ENCODE measurements at regions of chr5 and their contacts with region 1.

Region 1: DNA sequence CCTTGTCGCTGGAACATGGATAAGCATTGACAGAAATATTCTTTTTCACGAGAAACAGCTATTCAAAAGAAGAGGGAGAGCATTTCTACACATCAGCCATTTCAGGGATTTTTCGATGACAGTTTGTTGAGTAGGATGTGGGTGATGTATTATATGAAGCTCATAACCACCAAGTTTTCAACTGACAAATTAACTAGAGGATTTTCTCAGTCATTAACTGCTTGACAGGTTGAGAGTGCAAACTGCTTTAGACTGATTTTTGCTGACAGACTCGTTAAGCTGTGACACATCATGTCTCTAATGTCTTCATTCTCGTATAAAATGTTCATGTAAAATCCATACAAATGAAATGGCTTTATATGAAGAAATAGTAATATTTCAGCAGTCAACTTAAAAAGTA is 354.2 kb upstream of the KCNN2 start:
- DNase-seq: no peak
- H3K4me3 ChIP-seq: no peak overlapping the region
- H3K27ac ChIP-seq: no peak overlapping the region
- H3K4me1 ChIP-seq: no peaks in the 10 kb centered on the region
- H3K27me3 ChIP-seq: no peaks in the 10 kb centered on the region
- CTCF ChIP-seq: no peak
- EP300 ChIP-seq: no peak
- POLR2A ChIP-seq: no peak
- RAD21 ChIP-seq: no peak

Region 2: GRCh38 chr5:113660206-113660605 is 347.5 kb before region 1 on chr5:
- CTCF ChIA-PET with region 1: no interaction called
- POLR2A ChIA-PET with region 1: no interaction called
- DNase-seq: no peak
- H3K4me3 ChIP-seq: no peak overlapping the region
- H3K27ac ChIP-seq: no peak overlapping the region
- H3K4me1 ChIP-seq: no peaks in the 10 kb centered on the region; a peak in 1 of 7 replicates
- H3K27me3 ChIP-seq: no peaks in the 10 kb centered on the region
- CTCF ChIP-seq: no peak
- EP300 ChIP-seq: no peak
- POLR2A ChIP-seq: no peak
- RAD21 ChIP-seq: no peak

Region 3: DNA sequence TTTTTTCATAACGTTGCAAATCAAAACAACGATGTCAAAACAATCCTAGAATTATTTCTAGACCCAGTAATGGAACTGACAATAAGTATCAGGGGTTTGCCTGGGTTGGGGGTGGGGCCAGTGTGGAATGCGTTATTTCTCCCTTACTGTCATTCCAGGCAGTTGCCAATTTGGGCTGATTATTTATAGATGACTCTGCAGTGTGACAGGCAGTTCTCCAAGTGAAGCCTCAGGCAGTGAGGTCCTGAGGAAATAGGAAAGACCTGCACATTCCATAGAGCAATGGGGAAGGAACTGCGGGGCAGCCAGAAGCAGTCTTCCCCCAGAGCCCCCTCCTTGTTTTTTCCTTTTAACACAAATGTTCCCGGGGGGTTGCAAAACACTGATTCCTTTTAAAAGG is 315.2 kb before region 1 on chr5:
- CTCF ChIA-PET with region 1: no interaction called
- POLR2A ChIA-PET with region 1: no interaction called
- DNase-seq: no peak
- H3K4me3 ChIP-seq: peak overlapping the region in 2 of 4 experiments; percentile 30 to 49; a peak in 5 of 8 replicates
- H3K27ac ChIP-seq: no peak overlapping the region
- H3K4me1 ChIP-seq: peaks cover 3 to 13% (median 6%) of the 10 kb centered on the region in 4 experiments; a peak in 6 of 7 replicates
- H3K27me3 ChIP-seq: no peaks in the 10 kb centered on the region
- CTCF ChIP-seq: no peak
- EP300 ChIP-seq: no peak
- POLR2A ChIP-seq: no peak
- RAD21 ChIP-seq: no peak

Region 4: GRCh38 chr5:113937301-113937700 is 70.4 kb before region 1 on chr5:
- CTCF ChIA-PET with region 1: no interaction called
- POLR2A ChIA-PET with region 1: no interaction called
- DNase-seq: no peak
- H3K4me3 ChIP-seq: no peak overlapping the region
- H3K27ac ChIP-seq: no peak overlapping the region
- H3K4me1 ChIP-seq: peaks cover 0 to 9% (median 2%) of the 10 kb centered on the region in 4 experiments; a peak in 4 of 7 replicates
- H3K27me3 ChIP-seq: peaks cover 0 to 1% (median 0%) of the 10 kb centered on the region in 4 experiments; a peak in 1 of 7 replicates
- CTCF ChIP-seq: no peak
- EP300 ChIP-seq: no peak
- POLR2A ChIP-seq: no peak
- RAD21 ChIP-seq: no peak

Region 5: GRCh38 chr5:113990581-113990980 is 17.1 kb before region 1 on chr5:
- CTCF ChIA-PET with region 1: interaction called, 10 read pairs
- POLR2A ChIA-PET with region 1: no interaction called
- DNase-seq: no peak
- H3K4me3 ChIP-seq: no peak overlapping the region
- H3K27ac ChIP-seq: no peak overlapping the region
- H3K4me1 ChIP-seq: no peaks in the 10 kb centered on the region
- H3K27me3 ChIP-seq: no peaks in the 10 kb centered on the region
- CTCF ChIP-seq: peak in 1 of 3 experiments; percentile 11; a peak in 1 of 4 replicates
- EP300 ChIP-seq: no peak
- POLR2A ChIP-seq: no peak
- RAD21 ChIP-seq: no peak

Region 6: DNA sequence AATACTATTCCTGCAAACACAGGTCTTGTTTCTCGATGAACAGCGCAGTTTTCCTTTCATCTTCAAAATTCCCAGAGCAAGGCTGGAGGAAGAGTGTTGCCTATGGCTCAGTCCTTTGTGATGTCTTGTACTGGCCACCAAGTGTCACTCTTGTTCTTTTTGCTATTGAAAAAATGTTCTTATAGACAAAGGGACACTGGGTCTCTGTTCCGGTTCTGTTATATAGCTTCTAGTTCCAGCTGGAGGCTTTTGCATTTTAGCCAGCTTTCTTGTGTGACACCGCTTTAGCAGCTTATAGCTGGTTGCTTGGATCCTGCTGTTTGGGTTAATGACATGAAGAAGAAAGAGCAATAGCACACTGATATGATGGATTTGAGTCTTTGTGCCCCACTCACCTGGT is 10.5 kb after region 1 on chr5:
- CTCF ChIA-PET with region 1: interaction called, 18 read pairs
- POLR2A ChIA-PET with region 1: no interaction called
- DNase-seq: no peak
- H3K4me3 ChIP-seq: no peak overlapping the region
- H3K27ac ChIP-seq: no peak overlapping the region
- H3K4me1 ChIP-seq: no peaks in the 10 kb centered on the region
- H3K27me3 ChIP-seq: no peaks in the 10 kb centered on the region
- CTCF ChIP-seq: peak in 2 of 3 experiments; percentile 49 to 56; a peak in 3 of 4 replicates
- EP300 ChIP-seq: no peak
- POLR2A ChIP-seq: no peak
- RAD21 ChIP-seq: peak; percentile 78 to 79

Region 7: DNA sequence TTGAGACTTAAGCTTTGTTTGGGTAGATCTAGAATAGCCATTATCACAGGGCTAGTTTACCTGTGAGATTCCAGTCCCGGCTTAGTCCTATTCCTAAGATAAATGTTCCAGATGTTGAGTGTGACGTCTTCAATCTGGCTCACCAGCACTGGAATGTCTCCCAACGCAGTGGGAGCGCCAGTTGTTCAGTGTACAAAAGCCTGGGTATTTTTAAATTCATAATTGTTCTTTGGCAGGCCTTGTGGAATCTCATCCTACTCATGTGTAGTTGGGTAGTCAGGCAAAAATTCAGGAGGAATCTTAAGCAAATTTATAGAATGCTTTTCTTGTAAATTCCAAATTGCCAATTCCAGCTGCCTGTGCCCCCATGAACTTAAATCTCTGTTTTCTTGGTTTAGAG is 81.6 kb after region 1 on chr5:
- CTCF ChIA-PET with region 1: no interaction called
- POLR2A ChIA-PET with region 1: no interaction called
- DNase-seq: no peak
- H3K4me3 ChIP-seq: no peak overlapping the region
- H3K27ac ChIP-seq: no peak overlapping the region
- H3K4me1 ChIP-seq: no peaks in the 10 kb centered on the region
- H3K27me3 ChIP-seq: no peaks in the 10 kb centered on the region
- CTCF ChIP-seq: no peak
- EP300 ChIP-seq: no peak
- POLR2A ChIP-seq: no peak
- RAD21 ChIP-seq: no peak

Measured in H1 (cell line).